Activated CD4-positive, alpha-beta memory T cell treated with anti-CD3 and anti-CD28 coated beads for 36 hours (primary cell): ENCODE measurements at regions of chr4 and their contacts with region 1.

Region 1: DNA sequence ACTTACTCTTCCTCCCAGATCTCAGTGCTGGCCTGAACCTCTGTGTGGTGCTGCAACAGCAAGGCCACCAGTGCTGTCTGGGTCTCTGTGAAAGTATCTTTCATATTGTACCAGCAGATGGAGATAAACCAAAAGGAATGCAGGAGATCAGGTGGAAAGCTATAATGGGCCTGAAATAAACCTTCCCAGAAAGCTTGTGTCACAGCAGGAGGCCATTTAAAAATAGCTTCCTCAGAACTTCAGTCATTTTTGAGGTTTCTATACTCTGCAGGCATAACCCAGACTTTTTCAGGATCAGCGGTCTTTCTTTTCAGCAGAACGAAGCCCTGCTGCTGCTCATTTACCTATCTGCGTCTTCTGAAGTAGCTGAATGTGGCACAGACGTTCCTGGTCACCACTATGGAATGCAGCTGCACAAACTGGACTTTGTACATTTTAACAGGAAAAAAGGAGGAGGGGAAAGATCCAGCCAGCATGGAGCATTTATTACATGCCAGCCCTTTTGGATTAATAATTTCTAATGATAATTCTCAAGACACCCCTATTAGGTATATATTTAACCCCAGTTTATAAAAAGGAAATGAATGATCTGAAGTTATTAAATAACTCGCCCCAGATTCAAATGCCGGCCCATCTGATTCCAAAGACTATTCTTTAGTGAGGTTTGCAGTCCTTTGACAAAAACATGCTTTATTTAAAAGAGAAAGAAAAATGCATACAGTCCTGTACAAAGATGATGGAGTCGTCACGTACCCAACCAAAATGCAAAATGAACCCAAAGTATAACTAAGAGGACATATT is 119.7 kb downstream of the NFKB1 start:
- DNase-seq: no peak
- H3K4me3 Mint-ChIP-seq: no peak overlapping the region
- H3K27ac Mint-ChIP-seq: peak overlapping the region; percentile 76
- H3K4me1 Mint-ChIP-seq: peaks cover 49% of the 10 kb centered on the region
- H3K27me3 Mint-ChIP-seq: no peaks in the 10 kb centered on the region

Region 2: GRCh38 chr4:102430461-102430910 is 190.4 kb before region 1 on chr4:
- CTCF ChIA-PET with region 1: interaction called, 8 read pairs
- POLR2A ChIA-PET with region 1: no interaction called
- intact Hi-C with region 1: loop called (anchors 1 kb)
- DNase-seq: no peak
- H3K4me3 Mint-ChIP-seq: peak overlapping the region; percentile 82
- H3K27ac Mint-ChIP-seq: peak overlapping the region; percentile 62
- H3K4me1 Mint-ChIP-seq: peaks cover 8% of the 10 kb centered on the region
- H3K27me3 Mint-ChIP-seq: no peaks in the 10 kb centered on the region

Region 3: DNA sequence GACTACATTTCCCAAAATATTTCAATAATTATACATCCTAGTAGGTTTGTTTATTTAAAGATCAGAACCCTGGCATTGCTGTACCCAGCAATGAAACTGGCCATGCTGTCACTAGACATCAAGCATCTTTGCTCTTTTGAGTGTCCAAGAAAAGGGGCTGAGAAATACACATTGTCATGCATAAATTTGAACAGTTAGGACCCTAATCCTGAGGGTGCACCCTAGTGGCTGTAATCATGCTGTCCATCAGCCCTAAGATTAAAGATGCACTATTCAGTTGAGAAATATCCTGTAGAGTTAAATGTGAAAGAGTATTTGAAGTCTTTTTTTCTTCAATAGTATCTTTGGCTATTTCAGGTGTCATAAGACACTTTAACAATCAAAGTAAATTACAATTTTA is 10.9 kb before region 1 on chr4:
- CTCF ChIA-PET with region 1: interaction called, 7 read pairs
- POLR2A ChIA-PET with region 1: interaction called, 4 read pairs
- intact Hi-C with region 1: loop called (anchors 1 kb)
- DNase-seq: no peak
- H3K4me3 Mint-ChIP-seq: no peak overlapping the region
- H3K27ac Mint-ChIP-seq: peak overlapping the region; percentile 31
- H3K4me1 Mint-ChIP-seq: peaks cover 86% of the 10 kb centered on the region
- H3K27me3 Mint-ChIP-seq: no peaks in the 10 kb centered on the region

Region 4: GRCh38 chr4:102674881-102675540 is 54.1 kb after region 1 on chr4:
- CTCF ChIA-PET with region 1: no interaction called
- POLR2A ChIA-PET with region 1: no interaction called
- intact Hi-C with region 1: no loop called
- DNase-seq: no peak
- H3K4me3 Mint-ChIP-seq: no peak overlapping the region
- H3K27ac Mint-ChIP-seq: no peak overlapping the region
- H3K4me1 Mint-ChIP-seq: peaks cover 14% of the 10 kb centered on the region
- H3K27me3 Mint-ChIP-seq: no peaks in the 10 kb centered on the region

Region 5: GRCh38 chr4:103008875-103009729 is 388.2 kb after region 1 on chr4:
- CTCF ChIA-PET with region 1: interaction called, 5 read pairs
- POLR2A ChIA-PET with region 1: no interaction called
- intact Hi-C with region 1: loop called (anchors 1 kb)
- DNase-seq: no peak
- H3K4me3 Mint-ChIP-seq: no peak overlapping the region
- H3K27ac Mint-ChIP-seq: no peak overlapping the region
- H3K4me1 Mint-ChIP-seq: no peaks in the 10 kb centered on the region
- H3K27me3 Mint-ChIP-seq: no peaks in the 10 kb centered on the region